ENCODE measurements at regions of chr1 and their contacts with region 1.

Region 1: GRCh38 chr1:165073185-165074007 is 283.1 kb downstream of the LMX1A start:
- DNase-seq: no peak
- ATAC-seq: peak; percentile 81
- H3K4me3 Mint-ChIP-seq: no peak overlapping the region
- H3K27ac Mint-ChIP-seq: no peak overlapping the region
- H3K4me1 Mint-ChIP-seq: peaks cover 29% of the 10 kb centered on the region
- H3K27me3 Mint-ChIP-seq: no peaks in the 10 kb centered on the region
- CTCF ChIP-seq: peak; percentile 55

Region 2: DNA sequence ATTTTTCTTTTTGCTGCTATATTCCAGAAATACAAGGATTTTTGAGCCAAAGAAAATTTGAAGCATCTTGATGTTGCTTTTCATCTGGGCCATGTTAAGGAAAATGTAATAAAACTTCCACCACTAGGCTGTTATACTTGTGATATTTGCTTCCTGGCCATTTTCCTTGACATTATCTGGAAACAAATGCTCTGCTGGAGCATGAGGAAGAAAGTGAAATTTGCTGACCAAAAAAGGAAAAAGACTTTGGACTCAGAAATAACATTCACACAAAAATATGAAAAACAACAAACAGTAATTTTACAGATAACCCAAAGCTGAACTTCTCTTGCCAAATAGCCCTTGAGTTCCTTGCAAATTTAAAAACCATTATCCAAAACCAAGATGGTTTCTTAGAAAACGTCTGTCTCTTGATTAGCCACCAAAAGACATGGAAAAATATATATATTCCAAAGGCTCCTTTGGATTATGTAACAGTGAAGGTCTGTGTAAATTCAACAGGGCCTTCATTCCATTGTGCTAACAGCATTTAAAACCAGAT is 61.3 kb before region 1 on chr1:
- CTCF ChIA-PET with region 1: no interaction called
- POLR2A ChIA-PET with region 1: no interaction called
- DNase-seq: no peak
- ATAC-seq: no peak
- H3K4me3 Mint-ChIP-seq: no peak overlapping the region
- H3K27ac Mint-ChIP-seq: no peak overlapping the region
- H3K4me1 Mint-ChIP-seq: no peaks in the 10 kb centered on the region
- H3K27me3 Mint-ChIP-seq: no peaks in the 10 kb centered on the region; the same call in 1 of the 2 replicates
- CTCF ChIP-seq: no peak

Region 3: DNA sequence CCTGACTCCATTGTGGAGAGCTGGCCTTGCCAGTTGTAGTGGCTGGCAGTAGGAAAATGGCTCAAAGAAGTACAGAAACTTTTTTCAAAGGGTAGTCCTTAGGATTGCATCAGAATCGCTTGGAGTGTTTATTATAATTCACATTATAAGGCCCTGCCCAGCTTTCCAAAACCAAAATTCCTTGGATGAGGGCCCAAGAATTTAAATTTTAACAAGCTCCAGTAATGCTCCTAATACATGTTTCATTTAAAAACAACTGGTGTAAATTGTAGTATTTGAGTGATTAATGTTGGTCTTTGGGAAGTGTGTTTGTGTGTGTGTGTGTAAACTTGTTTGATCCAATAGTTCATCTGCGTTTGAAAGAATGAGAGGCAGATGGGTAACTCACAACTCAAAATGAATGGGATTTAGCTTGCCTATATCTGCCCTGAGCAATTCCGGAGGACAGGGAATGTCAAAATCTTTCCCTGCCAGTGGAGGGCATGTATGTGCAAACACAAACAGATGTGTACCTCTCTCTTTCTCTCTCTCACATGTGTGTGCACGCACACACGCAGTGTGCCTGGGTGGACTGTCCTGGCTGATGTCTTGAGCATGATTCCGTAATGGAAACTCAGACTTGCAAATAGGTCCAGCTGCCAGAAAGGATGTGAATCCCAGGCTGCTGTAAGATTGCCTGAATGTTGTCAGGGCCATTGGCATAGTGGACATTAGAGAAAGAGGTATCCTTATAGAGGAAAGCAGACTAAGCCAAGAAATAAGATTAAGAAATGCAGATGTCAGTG is 10.0 kb before region 1 on chr1:
- CTCF ChIA-PET with region 1: interaction called, 16 read pairs
- POLR2A ChIA-PET with region 1: no interaction called
- DNase-seq: no peak
- ATAC-seq: no peak
- H3K4me3 Mint-ChIP-seq: no peak overlapping the region
- H3K27ac Mint-ChIP-seq: no peak overlapping the region
- H3K4me1 Mint-ChIP-seq: peaks cover 6% of the 10 kb centered on the region
- H3K27me3 Mint-ChIP-seq: peaks cover 60% of the 10 kb centered on the region
- CTCF ChIP-seq: no peak

Measured in WTC11 (cell line).